ENCODE measurements at regions of chr5 and their contacts with region 1.

Region 1: GRCh38 chr5:141636413-141637122 is at the starts of genes HDAC3 and RELL2:
- DNase-seq: peak; percentile 70 to 95
- H3K4me3 ChIP-seq: peak within 1 kb of the TSS; percentile 79
- H3K27ac ChIP-seq: no peak within 1 kb of the TSS
- H3K4me1 ChIP-seq: peaks cover 23% of the 10 kb centered on the region
- H3K27me3 ChIP-seq: no peaks in the 10 kb centered on the region
- CTCF ChIP-seq: no peak
- total RNA-seq, gene HDAC3: 76.0 and 87.0 TPM in 2 replicates
- total RNA-seq, gene RELL2: 3.3 and 5.0 TPM in 2 replicates

Region 2: DNA sequence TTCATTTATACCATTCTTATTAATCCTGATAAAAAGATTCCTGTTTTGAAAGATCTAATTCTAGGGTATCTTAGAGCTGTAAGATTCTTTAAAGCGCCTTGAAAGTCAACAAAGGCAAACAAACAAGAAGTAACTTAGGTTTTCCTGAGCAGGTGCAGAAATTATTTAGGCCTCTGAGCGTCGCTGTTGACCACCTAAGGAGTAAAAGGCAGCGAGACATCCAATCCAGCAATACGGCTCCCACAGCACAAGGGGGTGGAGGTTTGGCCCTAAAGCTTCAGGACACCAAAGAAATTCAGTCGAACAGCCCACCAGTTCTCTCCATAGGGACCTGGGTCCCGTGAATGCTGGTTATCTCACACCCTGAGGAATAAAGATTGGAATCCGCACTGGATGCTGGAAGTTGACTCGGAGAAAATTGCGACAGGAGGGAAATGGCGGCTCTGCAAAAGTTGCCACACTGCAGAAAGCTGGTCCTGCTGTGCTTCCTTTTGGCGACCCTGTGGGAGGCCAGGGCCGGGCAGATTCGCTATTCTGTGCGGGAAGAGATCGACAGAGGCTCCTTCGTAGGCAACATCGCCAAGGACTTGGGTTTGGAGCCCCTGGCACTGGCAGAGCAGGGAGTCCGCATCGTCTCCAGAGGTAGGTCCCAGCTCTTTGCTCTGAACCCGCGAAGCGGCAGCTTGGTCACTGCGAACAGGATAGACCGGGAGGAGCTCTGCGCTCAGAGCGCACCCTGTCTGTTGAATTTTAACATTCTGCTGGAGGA is 297.8 kb before region 1 on chr5 and contains the start of gene PCDHGA2:
- CTCF ChIA-PET with region 1: no interaction called
- POLR2A ChIA-PET with region 1: no interaction called
- intact Hi-C with region 1: no loop called
- DNase-seq: peak in 1 of 2 experiments; percentile 19
- H3K4me3 ChIP-seq: no peak within 1 kb of the TSS
- H3K27ac ChIP-seq: no peak within 1 kb of the TSS
- H3K4me1 ChIP-seq: 0 out of 2 replicates have a peak, but pooled peaks cover 5% of the 10 kb centered on the region
- H3K27me3 ChIP-seq: no peaks in the 10 kb centered on the region
- CTCF ChIP-seq: peak; percentile 58
- total RNA-seq, gene PCDHGA2: 0.11 and 0.13 TPM in 2 replicates

Region 3: GRCh38 chr5:141585594-141585993 is 51.0 kb before region 1 on chr5:
- CTCF ChIA-PET with region 1: interaction called, 15 read pairs
- POLR2A ChIA-PET with region 1: no interaction called
- intact Hi-C with region 1: no loop called
- DNase-seq: no peak
- H3K4me3 ChIP-seq: no peak overlapping the region
- H3K27ac ChIP-seq: no peak overlapping the region
- H3K4me1 ChIP-seq: no peaks in the 10 kb centered on the region
- H3K27me3 ChIP-seq: no peaks in the 10 kb centered on the region
- CTCF ChIP-seq: no peak

Region 4: DNA sequence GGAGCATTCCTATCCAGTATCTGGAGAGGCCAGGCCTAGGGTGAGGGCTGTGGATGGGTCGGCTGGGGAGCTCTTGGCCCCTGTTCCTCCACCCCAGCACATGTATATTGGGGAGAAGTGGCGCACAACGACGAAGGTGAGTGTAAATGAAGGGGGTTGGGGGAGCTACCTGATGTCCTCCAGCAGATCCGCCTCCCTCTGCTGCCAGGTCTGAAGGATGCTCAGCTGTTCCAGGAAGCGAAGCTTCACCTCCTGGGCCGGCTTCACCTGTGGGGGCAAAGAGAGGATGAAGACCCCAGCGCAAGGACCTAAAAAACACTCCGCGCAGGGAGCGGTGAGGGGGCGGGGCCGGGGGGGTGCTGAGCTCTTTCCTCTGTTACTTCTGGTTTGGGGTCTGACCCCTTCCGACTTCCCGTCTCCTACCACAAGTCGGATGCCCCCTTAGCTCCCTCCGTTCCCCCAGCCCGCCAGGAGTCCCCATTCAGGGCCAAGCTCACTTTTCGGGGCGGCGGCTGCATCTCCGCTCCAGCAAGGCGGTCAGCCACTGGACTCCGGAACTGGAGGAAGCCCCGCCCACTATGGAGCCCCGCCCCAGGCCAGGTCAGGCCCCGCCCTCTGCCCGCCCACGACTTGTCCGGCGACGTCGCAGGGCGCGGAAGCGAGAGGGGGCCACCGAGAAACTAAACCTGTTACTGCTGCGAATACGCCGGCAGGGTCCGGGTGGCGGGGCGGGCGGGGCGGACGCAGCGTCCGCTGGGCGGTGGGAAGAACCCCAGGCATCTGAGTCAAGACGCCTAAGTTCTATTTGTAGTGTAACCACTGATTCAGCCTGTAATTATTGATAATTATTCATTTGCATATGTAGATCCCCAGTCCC is 14.5 kb after region 1 on chr5 and contains the start of gene FCHSD1:
- CTCF ChIA-PET with region 1: no interaction called
- POLR2A ChIA-PET with region 1: interaction called, 17 read pairs
- intact Hi-C with region 1: loop called (anchors 1 kb)
- DNase-seq: peak; percentile 61 to 86
- H3K4me3 ChIP-seq: peak within 1 kb of the TSS; percentile 69
- H3K27ac ChIP-seq: no peak within 1 kb of the TSS
- H3K4me1 ChIP-seq: peaks cover 15% of the 10 kb centered on the region
- H3K27me3 ChIP-seq: no peaks in the 10 kb centered on the region
- CTCF ChIP-seq: no peak
- total RNA-seq, gene FCHSD1: 36.4 and 36.6 TPM in 2 replicates

Region 5: GRCh38 chr5:141681695-141682641 is 45.4 kb after region 1 on chr5 and contains the start of gene ARAP3:
- CTCF ChIA-PET with region 1: no interaction called
- POLR2A ChIA-PET with region 1: no interaction called
- intact Hi-C with region 1: no loop called
- DNase-seq: peak; percentile 74 to 84
- H3K4me3 ChIP-seq: peak within 1 kb of the TSS; percentile 68
- H3K27ac ChIP-seq: peak within 1 kb of the TSS; percentile 89
- H3K4me1 ChIP-seq: peaks cover 22% of the 10 kb centered on the region
- H3K27me3 ChIP-seq: no peaks in the 10 kb centered on the region
- CTCF ChIP-seq: no peak
- total RNA-seq, gene ARAP3: 25.8 and 28.0 TPM in 2 replicates

Region 6: DNA sequence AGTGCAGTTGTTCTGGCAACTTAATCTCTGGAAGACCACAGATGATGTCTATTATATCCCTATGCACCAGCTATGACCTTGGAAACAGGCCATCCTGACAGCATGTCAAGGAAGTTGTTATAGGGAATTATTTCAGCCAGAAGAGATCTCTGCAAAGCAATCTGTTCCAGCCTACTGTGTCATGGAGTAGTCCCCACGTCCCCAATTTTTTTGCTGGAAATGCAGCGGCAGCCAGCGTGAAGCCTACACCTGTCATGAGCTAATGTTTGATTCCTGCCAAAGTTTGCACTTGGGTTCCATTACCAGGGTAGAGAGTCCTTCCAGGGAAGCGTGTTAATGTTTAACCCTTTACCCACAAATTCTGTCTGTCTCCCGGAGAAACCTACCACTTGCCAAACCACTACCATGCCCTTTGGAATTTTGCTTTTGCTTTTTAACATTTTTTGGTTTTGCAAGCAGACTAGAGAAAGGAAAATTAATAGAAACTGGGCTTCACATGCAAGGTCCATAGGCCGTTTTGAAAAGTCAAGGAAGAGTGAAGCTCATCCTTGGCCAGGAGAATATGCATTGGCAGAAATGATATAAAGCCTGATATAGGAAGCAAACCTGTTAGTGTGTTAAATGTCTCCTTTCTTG is 863.1 kb after region 1 on chr5:
- CTCF ChIA-PET with region 1: no interaction called
- POLR2A ChIA-PET with region 1: no interaction called
- intact Hi-C with region 1: no loop called
- DNase-seq: no peak
- H3K4me3 ChIP-seq: no peak overlapping the region
- H3K27ac ChIP-seq: no peak overlapping the region
- H3K4me1 ChIP-seq: no peaks in the 10 kb centered on the region
- H3K27me3 ChIP-seq: no peaks in the 10 kb centered on the region
- CTCF ChIP-seq: no peak